ENCODE measurements at regions of chr17 and their contacts with region 1.

Region 1: DNA sequence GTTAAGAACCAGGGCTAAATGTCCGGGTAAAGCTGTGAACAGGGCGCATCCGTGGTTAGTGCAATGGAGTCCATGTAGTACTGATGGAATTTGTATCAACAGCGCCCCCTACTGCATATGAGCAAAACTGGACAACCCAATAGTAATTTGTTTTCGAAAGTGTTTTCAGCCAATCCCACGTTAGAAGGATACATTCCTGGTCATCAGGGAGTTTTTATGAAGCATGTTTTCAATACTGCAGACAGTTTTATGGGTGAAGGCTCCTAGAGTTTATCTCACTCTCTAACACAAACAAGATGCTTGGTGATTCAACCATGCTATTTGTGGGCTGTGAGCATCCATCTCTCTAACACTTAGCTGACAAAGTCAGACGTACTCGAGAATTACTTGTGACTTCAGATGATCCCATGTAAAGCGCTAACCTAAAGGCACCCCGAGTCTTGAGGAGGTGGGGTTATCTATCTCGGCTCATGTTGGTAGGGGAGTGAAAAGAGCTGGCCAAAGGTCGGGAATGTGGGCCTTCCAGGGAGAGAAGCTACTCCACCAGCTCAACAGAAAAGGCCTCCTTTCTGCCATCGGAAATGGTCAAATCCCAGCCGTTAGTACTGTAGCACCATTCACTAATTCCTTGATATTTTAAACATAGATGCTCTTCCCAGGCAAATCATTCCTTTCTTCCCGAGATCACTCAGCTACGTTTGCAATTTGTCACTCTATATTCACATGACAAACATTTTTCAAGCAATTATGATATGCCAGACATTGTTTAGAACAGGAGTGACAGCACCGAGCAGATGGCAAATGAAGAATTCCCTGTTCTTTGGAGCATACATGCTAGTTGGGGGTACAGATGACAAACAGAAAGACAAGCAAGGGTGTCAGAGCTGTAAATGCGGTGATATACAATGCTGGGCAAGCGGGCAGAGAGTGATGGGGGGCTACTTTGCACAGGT is 46.9 kb upstream of the HNF1B start:
- DNase-seq: peak; percentile 74
- H3K4me3 Mint-ChIP-seq: no peak overlapping the region
- H3K27ac Mint-ChIP-seq: no peak overlapping the region
- H3K4me1 Mint-ChIP-seq: peaks cover 4% of the 10 kb centered on the region
- H3K27me3 Mint-ChIP-seq: peaks cover 81% of the 10 kb centered on the region

Region 2: DNA sequence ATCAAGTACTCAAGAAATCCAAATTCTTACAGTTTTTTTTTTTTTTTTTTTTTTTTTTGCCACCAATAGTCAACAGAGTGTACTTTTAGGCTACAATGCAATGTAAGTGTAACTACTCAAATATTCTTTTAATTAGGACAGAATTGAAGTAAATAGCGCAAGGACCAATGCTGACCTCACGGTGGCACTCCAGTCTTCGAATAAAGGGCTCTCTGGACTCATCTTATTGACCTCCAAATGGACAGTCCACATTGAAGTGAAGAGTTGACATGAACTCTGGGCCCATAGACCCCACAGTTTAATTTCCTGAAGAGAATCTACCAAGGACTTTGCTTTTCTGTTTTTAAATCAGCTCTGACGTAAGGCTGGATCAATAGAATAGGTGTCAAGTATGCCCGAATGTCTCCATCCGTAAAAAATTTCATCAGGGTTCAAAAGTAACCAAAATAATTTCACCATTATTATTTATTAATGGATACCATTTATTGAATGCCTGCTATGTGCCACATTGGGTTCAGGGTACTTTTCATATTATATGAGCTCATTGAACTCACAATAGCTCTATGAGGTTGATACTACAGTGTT is 141.2 kb before region 1 on chr17:
- CTCF ChIA-PET with region 1: interaction called, 10 read pairs
- DNase-seq: no peak
- H3K4me3 Mint-ChIP-seq: no peak overlapping the region
- H3K27ac Mint-ChIP-seq: no peak overlapping the region
- H3K4me1 Mint-ChIP-seq: peaks cover 3% of the 10 kb centered on the region
- H3K27me3 Mint-ChIP-seq: peaks cover 58% of the 10 kb centered on the region

Region 3: DNA sequence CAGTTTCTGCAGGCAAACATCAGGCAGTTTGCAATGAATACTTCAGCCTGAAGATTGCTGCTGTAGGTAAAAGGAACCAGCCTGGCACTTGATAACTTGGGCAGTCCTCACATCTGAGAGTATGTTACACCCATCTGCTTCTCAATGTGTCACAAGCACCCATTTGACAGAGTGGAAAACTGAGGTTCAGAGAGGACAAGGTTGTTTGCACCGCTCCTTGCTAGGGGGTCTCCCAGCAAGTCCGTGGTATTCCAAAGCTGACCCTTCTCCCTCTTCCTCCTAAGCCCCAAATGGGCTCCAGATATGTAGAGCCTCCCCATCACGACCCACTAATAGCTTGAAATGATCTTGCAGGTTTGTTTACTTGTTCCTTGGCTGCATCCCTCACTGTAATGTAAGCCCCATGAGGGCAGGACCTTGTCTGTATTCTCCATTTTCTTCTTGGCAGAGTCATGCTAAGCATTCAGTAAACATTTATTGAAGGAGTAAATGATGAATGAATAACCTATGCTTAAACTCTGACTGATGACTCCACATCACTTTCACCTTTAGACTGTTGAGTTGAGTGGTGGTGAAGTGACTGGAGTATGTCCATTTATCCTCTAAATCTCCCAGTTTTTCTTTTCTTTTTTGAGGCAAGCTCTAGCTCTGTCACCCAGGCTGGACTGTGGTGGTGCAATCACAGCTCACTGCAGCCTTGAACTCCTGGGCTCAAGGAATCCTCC is 73.2 kb before region 1 on chr17:
- CTCF ChIA-PET with region 1: no interaction called
- DNase-seq: no peak
- H3K4me3 Mint-ChIP-seq: no peak overlapping the region
- H3K27ac Mint-ChIP-seq: no peak overlapping the region
- H3K4me1 Mint-ChIP-seq: peaks cover 6% of the 10 kb centered on the region
- H3K27me3 Mint-ChIP-seq: peaks cover 71% of the 10 kb centered on the region

Region 4: GRCh38 chr17:37888881-37889280 is 97.2 kb after region 1 on chr17:
- CTCF ChIA-PET with region 1: no interaction called
- DNase-seq: no peak
- H3K4me3 Mint-ChIP-seq: no peak overlapping the region
- H3K27ac Mint-ChIP-seq: no peak overlapping the region
- H3K4me1 Mint-ChIP-seq: peaks cover 8% of the 10 kb centered on the region
- H3K27me3 Mint-ChIP-seq: peaks cover 12% of the 10 kb centered on the region